PC-9 (cell line): ENCODE measurements at regions of chr5 and their contacts with region 1.

Region 1: DNA sequence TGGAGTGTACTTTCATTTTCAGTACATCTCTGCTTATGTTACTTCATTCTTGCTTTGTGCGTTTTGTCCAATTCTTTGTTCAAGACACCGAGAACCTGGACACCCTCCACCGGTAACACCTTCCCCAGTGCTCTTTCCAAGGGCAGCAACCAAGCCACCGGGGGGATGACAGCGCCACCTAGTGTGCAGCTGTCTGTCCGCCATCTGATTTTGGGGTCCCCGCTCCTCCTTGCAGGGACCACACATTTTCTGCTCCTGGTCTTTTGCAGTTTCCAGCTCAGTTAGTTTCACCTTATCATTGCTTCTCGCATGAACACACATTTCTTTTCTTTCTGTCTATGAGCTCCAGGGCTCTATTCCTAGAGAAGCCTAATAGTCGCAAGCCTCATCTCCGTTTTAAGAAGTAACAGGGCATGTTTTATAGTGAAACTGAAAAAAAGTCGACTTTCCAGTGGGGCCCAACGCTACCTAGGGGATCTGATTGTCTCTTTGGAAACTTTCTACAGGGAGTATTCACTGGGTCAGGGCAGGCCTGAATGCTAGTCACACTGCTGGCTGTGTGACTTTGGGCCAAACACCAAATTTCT is 152.1 kb downstream of the FSTL4 start:
- DNase-seq: peak in 1 of 2 experiments; percentile 21
- H3K4me3 ChIP-seq: no peak overlapping the region
- H3K27ac ChIP-seq: no peak overlapping the region
- H3K4me1 ChIP-seq: peaks cover 45% of the 10 kb centered on the region
- H3K27me3 ChIP-seq: no peaks in the 10 kb centered on the region
- CTCF ChIP-seq: peak; percentile 66

Region 2: GRCh38 chr5:133642153-133642552 is 181.9 kb after region 1 on chr5:
- CTCF ChIA-PET with region 1: interaction called, 19 read pairs
- POLR2A ChIA-PET with region 1: no interaction called
- intact Hi-C with region 1: no loop called
- DNase-seq: no peak
- H3K4me3 ChIP-seq: no peak overlapping the region
- H3K27ac ChIP-seq: no peak overlapping the region
- H3K4me1 ChIP-seq: no peaks in the 10 kb centered on the region
- H3K27me3 ChIP-seq: no peaks in the 10 kb centered on the region
- CTCF ChIP-seq: no peak

Region 3: GRCh38 chr5:133831491-133832224 is 371.4 kb after region 1 on chr5:
- CTCF ChIA-PET with region 1: no interaction called
- POLR2A ChIA-PET with region 1: interaction called, 14 read pairs
- intact Hi-C with region 1: no loop called
- DNase-seq: peak in 1 of 2 experiments; percentile 83
- H3K4me3 ChIP-seq: no peak overlapping the region; the same call in 1 of the 2 replicates
- H3K27ac ChIP-seq: peak overlapping the region; percentile 68
- H3K4me1 ChIP-seq: peaks cover 34% of the 10 kb centered on the region
- H3K27me3 ChIP-seq: no peaks in the 10 kb centered on the region
- CTCF ChIP-seq: no peak